ENCODE measurements at regions of chr11 and their contacts with region 1.

Region 1: GRCh38 chr11:43664295-43664694 is 16.2 kb upstream of the HSD17B12 start:
- DNase-seq: no peak
- ATAC-seq: no peak
- H3K4me3 ChIP-seq: no peak overlapping the region
- H3K27ac ChIP-seq: no peak overlapping the region
- H3K4me1 ChIP-seq: no peaks in the 10 kb centered on the region; a peak in 2 of 5 replicates
- H3K27me3 ChIP-seq: no peaks in the 10 kb centered on the region
- CTCF ChIP-seq: no peak
- EP300 ChIP-seq: no peak
- POLR2A ChIP-seq: no peak
- RAD21 ChIP-seq: no peak

Region 2: GRCh38 chr11:43680521-43681400 is 16.5 kb after region 1 on chr11 and contains the start of gene HSD17B12:
- CTCF ChIA-PET with region 1: no interaction called
- POLR2A ChIA-PET with region 1: no interaction called
- in situ Hi-C with region 1: no loop called
- intact Hi-C with region 1: loop called (anchors 2 kb)
- DNase-seq: peak; percentile 66 to 83 (median 72)
- ATAC-seq: peak; percentile 91
- H3K4me3 ChIP-seq: peak within 1 kb of the TSS; percentile 45
- H3K27ac ChIP-seq: peak within 1 kb of the TSS; percentile 76
- H3K4me1 ChIP-seq: peaks cover 5 to 12% of the 10 kb centered on the region in 2 experiments; a peak in 3 of 5 replicates
- H3K27me3 ChIP-seq: no peaks in the 10 kb centered on the region
- CTCF ChIP-seq: no peak
- EP300 ChIP-seq: no peak
- POLR2A ChIP-seq: peak; percentile 73
- RAD21 ChIP-seq: no peak
- polyA plus RNA-seq, gene HSD17B12: 9.1 to 10.3 TPM

Region 3: GRCh38 chr11:43868852-43869567 is 204.7 kb after region 1 on chr11:
- CTCF ChIA-PET with region 1: no interaction called
- POLR2A ChIA-PET with region 1: no interaction called
- in situ Hi-C with region 1: no loop called
- intact Hi-C with region 1: no loop called
- DNase-seq: peak; percentile 32 to 81 (median 58)
- ATAC-seq: peak; percentile 98
- H3K4me3 ChIP-seq: no peak overlapping the region
- H3K27ac ChIP-seq: peak overlapping the region; percentile 54
- H3K4me1 ChIP-seq: peaks cover 0 to 13% of the 10 kb centered on the region in 2 experiments; a peak in 4 of 5 replicates
- H3K27me3 ChIP-seq: peaks cover 8 to 10% of the 10 kb centered on the region in 2 experiments
- CTCF ChIP-seq: no peak
- EP300 ChIP-seq: peak; percentile 89
- POLR2A ChIP-seq: no peak
- RAD21 ChIP-seq: peak in 1 of 2 experiments; percentile 11; a peak in 1 of 4 replicates

Measured in K562 (cell line).